CD4-positive, alpha-beta memory T cell (primary cell): ENCODE measurements at regions of chr14 and their contacts with region 1.

Region 1: GRCh38 chr14:99628832-99629618 is 15.9 kb upstream of the HHIPL1 start:
- DNase-seq: peak; percentile 46 to 58 (median 53)
- H3K4me3 ChIP-seq: no peak overlapping the region
- H3K4me3 Mint-ChIP-seq: no peak overlapping the region
- H3K27ac ChIP-seq: no peak overlapping the region
- H3K27ac Mint-ChIP-seq: no peak overlapping the region
- H3K4me1 ChIP-seq: peaks cover 3% of the 10 kb centered on the region
- H3K4me1 Mint-ChIP-seq: peaks cover 0 to 5% (median 2%) of the 10 kb centered on the region in 4 donors
- H3K27me3 ChIP-seq: no peaks in the 10 kb centered on the region
- H3K27me3 Mint-ChIP-seq: peaks cover 4 to 22% of the 10 kb centered on the region in 2 donors

Region 2: DNA sequence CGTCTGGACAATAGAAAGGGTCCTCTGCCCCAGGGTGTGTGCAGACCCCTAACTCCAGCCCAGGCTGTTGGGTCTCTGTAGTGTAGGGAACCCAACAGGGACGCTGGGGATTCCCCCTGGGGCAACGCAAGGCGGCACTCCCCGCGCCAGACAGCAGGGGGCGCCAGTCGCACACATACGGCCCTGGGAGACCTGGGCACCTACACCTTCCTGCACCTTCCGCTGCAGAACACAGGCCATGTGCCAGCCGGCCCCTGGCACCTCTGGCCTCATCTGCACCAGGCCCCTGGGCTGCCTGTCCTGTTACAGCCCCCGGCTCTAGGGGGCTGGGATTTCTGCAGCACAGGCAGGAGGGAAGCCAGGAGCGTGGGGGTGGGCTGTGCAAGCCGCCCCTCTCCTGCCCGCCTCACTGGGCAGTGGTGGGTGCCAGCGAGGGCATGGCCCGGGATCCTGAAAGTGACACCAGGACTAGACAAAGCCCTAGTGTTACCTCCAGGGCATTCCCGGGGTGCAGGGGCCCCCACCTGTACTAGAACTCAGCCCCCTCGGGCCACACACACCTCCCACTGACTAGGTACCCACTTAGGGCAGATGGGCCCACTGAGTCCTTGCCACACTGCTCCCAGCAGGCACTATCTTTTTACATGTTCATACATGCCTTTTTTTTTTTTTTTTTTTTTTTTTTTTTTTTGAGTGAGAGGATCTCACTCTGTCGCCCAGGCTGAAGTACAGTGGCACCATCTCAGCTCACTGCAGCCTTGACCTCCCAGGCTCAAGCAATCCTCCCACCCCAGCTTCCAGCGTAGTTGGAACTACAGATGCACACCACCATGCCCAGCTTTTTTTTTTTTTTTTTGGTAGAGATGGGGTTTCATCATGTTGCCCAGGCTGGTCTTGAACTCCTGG is 110.3 kb before region 1 on chr14:
- CTCF ChIA-PET with region 1: interaction called, 30 read pairs
- POLR2A ChIA-PET with region 1: no interaction called
- intact Hi-C with region 1: loop called (anchors 1 kb)
- DNase-seq: peak; percentile 75 to 83 (median 78)
- H3K4me3 ChIP-seq: no peak overlapping the region
- H3K4me3 Mint-ChIP-seq: no peak overlapping the region
- H3K27ac ChIP-seq: no peak overlapping the region
- H3K27ac Mint-ChIP-seq: peak overlapping the region in 1 of 7 donors; percentile 24
- H3K4me1 ChIP-seq: no peaks in the 10 kb centered on the region
- H3K4me1 Mint-ChIP-seq: no peaks in the 10 kb centered on the region
- H3K27me3 ChIP-seq: no peaks in the 10 kb centered on the region
- H3K27me3 Mint-ChIP-seq: no peaks in the 10 kb centered on the region

Region 3: GRCh38 chr14:99524804-99525698 is 104.0 kb before region 1 on chr14:
- CTCF ChIA-PET with region 1: interaction called, 10 read pairs
- POLR2A ChIA-PET with region 1: no interaction called
- intact Hi-C with region 1: no loop called
- DNase-seq: peak in 4 of 5 donors; percentile 8 to 30 (median 24)
- H3K4me3 ChIP-seq: no peak overlapping the region
- H3K4me3 Mint-ChIP-seq: peak overlapping the region; percentile 51 to 83 (median 70)
- H3K27ac ChIP-seq: no peak overlapping the region
- H3K27ac Mint-ChIP-seq: peak overlapping the region; percentile 15 to 95 (median 93)
- H3K4me1 ChIP-seq: peaks cover 20% of the 10 kb centered on the region
- H3K4me1 Mint-ChIP-seq: peaks cover 5 to 22% (median 12%) of the 10 kb centered on the region in 4 donors
- H3K27me3 ChIP-seq: no peaks in the 10 kb centered on the region
- H3K27me3 Mint-ChIP-seq: no peaks in the 10 kb centered on the region

Region 4: GRCh38 chr14:99595034-99595433 is 34.0 kb before region 1 on chr14:
- CTCF ChIA-PET with region 1: no interaction called
- POLR2A ChIA-PET with region 1: no interaction called
- intact Hi-C with region 1: no loop called
- DNase-seq: peak; percentile 29 to 50 (median 32)
- H3K4me3 ChIP-seq: peak overlapping the region; percentile 31 to 36
- H3K4me3 Mint-ChIP-seq: peak overlapping the region; percentile 77 to 92 (median 82)
- H3K27ac ChIP-seq: peak overlapping the region; percentile 10
- H3K27ac Mint-ChIP-seq: peak overlapping the region; percentile 12 to 96 (median 94)
- H3K4me1 ChIP-seq: peaks cover 20% of the 10 kb centered on the region
- H3K4me1 Mint-ChIP-seq: peaks cover 10 to 41% (median 24%) of the 10 kb centered on the region in 4 donors
- H3K27me3 ChIP-seq: no peaks in the 10 kb centered on the region
- H3K27me3 Mint-ChIP-seq: no peaks in the 10 kb centered on the region